ENCODE measurements at regions of chr19 and their contacts with region 1.

Region 1: DNA sequence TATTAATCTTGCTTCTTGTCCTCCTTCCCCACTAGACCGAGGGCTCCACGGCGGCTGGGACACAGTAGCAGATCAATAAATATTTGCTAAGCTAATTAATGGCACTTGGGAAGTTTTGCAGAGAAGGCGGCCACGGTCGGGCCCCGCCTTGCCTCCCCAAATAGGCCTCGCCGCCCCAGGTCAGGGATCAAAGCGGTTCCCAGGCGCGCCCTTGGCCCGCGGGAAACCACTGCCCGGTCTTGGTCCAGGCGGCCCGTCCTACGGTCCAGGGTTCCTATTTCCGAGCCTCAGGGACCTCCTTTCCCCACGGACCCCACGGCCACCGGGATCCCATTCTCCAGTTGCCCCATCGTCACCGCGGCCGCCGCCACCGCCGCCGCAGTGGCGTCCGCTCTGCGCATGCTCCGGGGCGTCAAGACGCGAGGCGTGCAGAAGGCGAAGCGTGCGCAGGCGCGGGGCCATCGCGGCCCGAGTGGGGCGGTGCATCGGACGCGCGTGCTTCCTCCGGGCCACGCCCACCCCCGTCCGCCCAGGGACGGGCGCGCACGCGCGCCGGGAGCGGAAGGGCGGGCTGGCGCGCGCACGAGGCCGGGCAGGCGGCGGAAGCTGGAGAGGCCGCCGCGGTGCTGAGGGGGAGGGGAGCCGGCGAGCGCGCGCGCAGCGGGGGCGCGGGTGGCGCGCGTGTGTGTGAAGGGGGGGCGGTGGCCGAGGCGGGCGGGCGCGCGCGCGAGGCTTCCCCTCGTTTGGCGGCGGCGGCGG is at the start of gene SMARCA4:
- DNase-seq: peak; percentile 99
- CTCF ChIP-seq: no peak

Region 2: DNA sequence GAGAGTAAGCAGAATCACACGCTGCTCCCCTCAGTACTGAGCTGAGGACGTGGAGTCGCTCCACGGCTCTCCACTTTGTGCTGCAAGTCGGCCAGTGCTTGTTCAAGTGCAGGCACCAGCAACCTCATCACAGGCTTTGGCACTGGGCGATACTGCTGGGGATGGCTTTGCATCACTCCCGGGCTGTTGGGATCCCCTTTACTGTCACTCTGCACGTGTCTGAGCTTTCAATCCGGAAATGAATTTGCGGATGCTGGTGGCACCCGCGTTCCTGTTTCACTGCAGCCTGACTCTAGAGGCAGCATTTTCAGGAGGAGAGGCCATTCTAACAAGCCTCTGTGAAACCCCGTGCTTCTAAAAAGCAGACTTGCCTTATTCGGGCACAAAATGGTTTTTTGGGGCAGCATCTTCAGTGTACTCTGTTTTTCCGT is 19.5 kb after region 1 on chr19:
- CTCF ChIA-PET with region 1: interaction called, 11 read pairs
- POLR2A ChIA-PET with region 1: no interaction called
- DNase-seq: no peak
- CTCF ChIP-seq: no peak